ENCODE measurements at regions of chr1 and their contacts with region 1.

Region 1: DNA sequence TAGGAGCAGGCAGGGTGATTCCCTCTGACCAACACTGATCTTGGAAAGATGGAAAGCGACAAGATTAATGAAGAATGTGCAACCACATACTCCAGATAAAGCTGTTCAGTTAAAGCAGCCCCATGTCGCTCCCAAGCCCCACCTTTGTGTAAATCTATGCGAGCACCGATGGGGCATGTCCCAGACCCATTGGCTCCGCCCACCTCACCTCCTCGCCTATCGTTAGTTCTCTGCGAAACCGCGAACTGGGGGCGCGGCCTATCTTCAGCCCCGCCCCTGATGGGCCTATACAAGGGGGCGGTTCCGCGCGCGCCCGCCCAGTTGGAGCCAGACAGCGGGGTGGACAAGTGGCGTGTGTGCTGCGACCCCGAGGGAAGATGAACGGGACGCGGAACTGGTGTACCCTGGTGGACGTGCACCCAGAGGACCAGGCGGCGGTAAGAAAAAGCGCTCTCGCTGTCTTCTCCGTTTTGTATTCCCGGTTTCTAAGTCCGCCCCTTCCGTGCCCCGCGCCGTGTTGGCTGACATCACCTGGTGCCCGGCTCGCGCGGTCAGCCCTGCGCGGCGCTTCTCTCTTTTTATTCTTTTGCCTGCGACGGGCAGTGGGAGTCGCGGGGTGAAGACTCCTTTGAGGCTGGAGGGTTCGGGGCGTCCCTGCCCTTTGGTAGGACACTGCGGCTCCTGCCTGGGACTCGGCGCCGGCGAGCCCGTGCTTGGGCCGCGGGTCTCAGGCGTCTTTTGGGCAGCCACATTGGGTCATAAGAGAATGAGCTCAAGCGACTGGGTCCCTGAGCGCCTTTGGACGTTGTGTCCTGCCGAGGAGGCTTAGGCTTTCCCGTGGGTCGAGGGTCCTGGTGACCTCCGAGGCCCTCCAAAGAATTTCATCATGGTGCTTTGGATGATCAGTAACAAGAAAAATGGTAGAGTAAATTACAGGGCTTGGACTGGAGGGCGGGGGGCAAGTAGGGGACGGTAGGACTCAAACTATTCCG is at the start of gene TUFT1:
- DNase-seq: peak; percentile 89 to 91
- ATAC-seq: peak; percentile 97 to 98 (median 98)
- H3K4me3 ChIP-seq: peak within 1 kb of the TSS; percentile 48 to 86 (median 70)
- H3K27ac ChIP-seq: peak within 1 kb of the TSS in 8 of 10 donors; percentile 30 to 79 (median 59)
- H3K4me1 ChIP-seq: peaks cover 0 to 24% (median 12%) of the 10 kb centered on the region in 9 donors
- H3K27me3 ChIP-seq: peaks cover 0 to 11% (median 0%) of the 10 kb centered on the region in 7 donors
- CTCF ChIP-seq: no peak
- total RNA-seq, gene TUFT1: 2.9 to 13.0 (median 5.5) TPM

Region 2: GRCh38 chr1:151443846-151444782 is 96.2 kb before region 1 on chr1:
- intact Hi-C with region 1: loop called in 3 of 10 experiments (anchors 5 to 10 kb)
- DNase-seq: peak in 1 of 2 donors; percentile 64
- ATAC-seq: peak; percentile 62 to 91 (median 88)
- H3K4me3 ChIP-seq: no peak overlapping the region
- H3K27ac ChIP-seq: peak overlapping the region in 1 of 10 donors; percentile 43
- H3K4me1 ChIP-seq: peaks cover 3 to 66% (median 40%) of the 10 kb centered on the region in 9 donors
- H3K27me3 ChIP-seq: no peaks in the 10 kb centered on the region
- CTCF ChIP-seq: peak; percentile 30 to 83 (median 68)

Region 3: DNA sequence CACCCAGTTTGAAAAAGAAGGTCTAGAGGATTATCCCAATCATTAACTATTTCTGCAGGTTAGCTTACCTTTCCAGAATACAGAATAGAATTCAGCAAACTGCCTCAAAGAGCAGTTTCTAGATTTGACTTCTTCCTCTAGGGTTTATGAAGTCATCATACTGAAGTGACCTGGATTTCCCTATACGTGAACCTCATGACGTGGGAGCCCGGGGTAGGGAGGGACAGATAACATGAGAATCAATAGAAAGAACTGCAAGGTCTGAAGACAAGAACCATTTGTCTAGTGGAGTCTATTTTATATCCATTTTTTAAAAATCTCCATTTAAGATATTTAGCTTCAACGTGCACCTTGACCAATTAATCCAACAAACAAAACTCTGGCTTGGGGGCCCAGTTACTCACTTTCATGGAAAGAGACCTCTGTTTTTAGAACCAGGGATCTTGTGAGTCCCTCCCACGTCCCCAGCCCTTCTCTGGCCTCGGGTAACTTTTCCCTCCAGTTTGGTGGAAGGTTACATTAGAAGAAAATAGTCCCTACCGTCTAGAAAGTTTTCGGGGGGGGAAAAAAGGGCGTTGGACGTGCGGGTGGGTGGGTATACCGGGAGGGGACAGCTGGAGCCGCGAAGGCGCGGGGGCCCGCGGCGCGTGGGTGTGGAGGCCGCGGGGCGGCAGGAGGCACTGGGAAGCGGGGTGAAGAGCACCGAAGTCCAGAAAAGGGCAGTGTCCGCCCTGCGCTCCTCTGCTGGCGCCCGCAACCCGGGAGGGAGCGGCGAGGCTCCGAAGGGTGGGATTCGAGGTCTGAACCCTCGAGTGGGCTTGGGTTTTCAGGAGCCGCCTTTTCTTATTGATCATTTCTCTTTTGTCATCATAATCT is 67.2 kb before region 1 on chr1:
- intact Hi-C with region 1: loop called in 1 of 10 experiments (anchors 10 kb)
- DNase-seq: peak; percentile 48 to 62
- ATAC-seq: peak; percentile 81 to 91 (median 88)
- H3K4me3 ChIP-seq: peak overlapping the region; percentile 50 to 79 (median 64)
- H3K27ac ChIP-seq: peak overlapping the region in 9 of 10 donors; percentile 57 to 90 (median 78)
- H3K4me1 ChIP-seq: peaks cover 0 to 13% (median 6%) of the 10 kb centered on the region in 9 donors
- H3K27me3 ChIP-seq: no peaks in the 10 kb centered on the region
- CTCF ChIP-seq: no peak

Region 4: GRCh38 chr1:151508833-151509232 is 31.5 kb before region 1 on chr1:
- intact Hi-C with region 1: no loop called
- DNase-seq: no peak
- ATAC-seq: no peak
- H3K4me3 ChIP-seq: no peak overlapping the region
- H3K27ac ChIP-seq: no peak overlapping the region
- H3K4me1 ChIP-seq: peaks cover 12 to 34% (median 16%) of the 10 kb centered on the region in 9 donors
- H3K27me3 ChIP-seq: peaks cover 0 to 45% (median 15%) of the 10 kb centered on the region in 7 donors
- CTCF ChIP-seq: no peak

Region 5: DNA sequence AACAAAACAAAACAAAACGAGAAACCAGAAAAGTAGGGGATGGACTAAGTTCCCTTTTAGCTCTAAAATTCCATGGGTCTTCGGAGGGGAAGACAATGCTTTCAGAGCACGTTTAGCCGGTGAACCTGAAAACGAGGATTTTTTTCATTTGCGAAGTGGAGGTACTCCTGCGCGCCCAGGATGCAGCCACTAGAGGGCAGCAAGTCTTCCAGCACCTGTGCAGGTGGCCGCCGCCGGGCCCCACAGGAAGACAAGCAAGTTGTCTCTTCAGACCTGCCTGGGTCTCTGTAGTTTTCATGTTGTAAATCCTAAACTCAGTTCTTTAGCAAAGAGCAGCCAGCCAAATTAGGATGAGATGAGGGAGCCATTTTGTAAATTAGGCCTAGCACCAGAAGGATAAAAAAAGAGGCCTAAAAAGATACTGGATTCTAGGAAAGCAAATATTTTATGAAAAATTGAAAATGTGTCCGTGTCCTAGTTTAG is 53.9 kb after region 1 on chr1:
- intact Hi-C with region 1: loop called in 1 of 10 experiments (anchors 10 kb)
- DNase-seq: peak; percentile 67 to 73
- ATAC-seq: peak in 6 of 8 donors; percentile 55 to 76 (median 62)
- H3K4me3 ChIP-seq: peak overlapping the region in 4 of 10 donors; percentile 15 to 30 (median 16)
- H3K27ac ChIP-seq: no peak overlapping the region
- H3K4me1 ChIP-seq: peaks cover 0 to 12% (median 0%) of the 10 kb centered on the region in 9 donors
- H3K27me3 ChIP-seq: no peaks in the 10 kb centered on the region
- CTCF ChIP-seq: peak; percentile 72 to 95 (median 92)

Region 6: GRCh38 chr1:151773702-151774101 is 233.4 kb after region 1 on chr1:
- intact Hi-C with region 1: no loop called
- DNase-seq: no peak
- ATAC-seq: no peak
- H3K4me3 ChIP-seq: no peak overlapping the region
- H3K27ac ChIP-seq: no peak overlapping the region
- H3K4me1 ChIP-seq: no peaks in the 10 kb centered on the region
- H3K27me3 ChIP-seq: no peaks in the 10 kb centered on the region
- CTCF ChIP-seq: no peak